Right ventricle myocardium inferior (tissue), 1 donor: ENCODE measurements at regions of chr11 and their contacts with region 1.

Region 1: GRCh38 chr11:83071567-83072349 is at the start of gene RAB30:
- DNase-seq: peak; percentile 95
- ATAC-seq: peak; percentile 99
- total RNA-seq, gene RAB30: 28.2 TPM

Region 2: DNA sequence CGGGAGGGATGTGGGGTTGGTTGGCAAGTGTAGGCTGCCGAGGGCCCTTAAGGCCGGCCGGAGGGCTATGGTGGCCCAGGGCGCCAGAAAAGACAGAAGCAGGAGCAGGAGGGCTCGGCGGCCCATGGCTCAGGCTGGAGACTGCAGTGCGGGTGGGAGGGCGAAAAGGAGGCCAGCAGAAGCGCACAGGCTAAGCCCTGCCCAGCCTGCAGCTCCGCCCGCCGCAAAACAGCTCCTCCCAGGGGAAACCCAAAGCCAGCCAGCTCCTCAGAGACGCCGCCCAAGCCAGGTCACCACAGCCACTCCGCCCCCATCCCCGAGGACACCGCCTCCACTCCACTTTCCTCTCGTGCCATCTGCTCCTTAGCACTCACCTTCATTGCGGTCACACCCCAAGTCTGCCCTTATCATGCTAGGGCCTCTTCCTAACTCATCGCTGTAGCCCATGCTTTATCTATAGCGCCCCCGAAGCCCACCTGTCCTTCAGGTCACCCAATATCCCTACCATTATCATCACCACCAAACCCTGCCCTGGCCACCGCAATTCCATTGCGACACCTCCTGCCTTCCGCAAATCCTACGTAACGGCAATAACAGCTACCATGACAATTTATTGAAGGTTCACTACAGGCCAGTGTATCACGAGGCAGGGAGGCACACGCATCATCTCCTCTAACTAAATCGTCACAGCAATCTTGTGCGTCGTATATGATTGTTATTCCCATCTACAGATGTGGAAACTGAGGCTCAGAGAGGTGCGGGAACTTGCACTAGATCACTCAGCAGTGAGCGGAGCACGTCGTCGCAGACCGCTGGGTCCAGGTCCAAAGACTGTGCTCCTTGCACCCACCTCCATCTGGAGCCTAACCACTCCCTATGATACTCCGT is 171.2 kb before region 1 on chr11 and contains the start of gene PRCP:
- intact Hi-C with region 1: loop called (anchors 10 kb)
- DNase-seq: peak; percentile 97
- ATAC-seq: peak; percentile 96
- total RNA-seq, gene PRCP: 43.4 TPM

Region 3: GRCh38 chr11:82989628-82990404 is 81.9 kb before region 1 on chr11:
- intact Hi-C with region 1: loop called (anchors 5 kb)
- DNase-seq: no peak
- ATAC-seq: no peak

Region 4: DNA sequence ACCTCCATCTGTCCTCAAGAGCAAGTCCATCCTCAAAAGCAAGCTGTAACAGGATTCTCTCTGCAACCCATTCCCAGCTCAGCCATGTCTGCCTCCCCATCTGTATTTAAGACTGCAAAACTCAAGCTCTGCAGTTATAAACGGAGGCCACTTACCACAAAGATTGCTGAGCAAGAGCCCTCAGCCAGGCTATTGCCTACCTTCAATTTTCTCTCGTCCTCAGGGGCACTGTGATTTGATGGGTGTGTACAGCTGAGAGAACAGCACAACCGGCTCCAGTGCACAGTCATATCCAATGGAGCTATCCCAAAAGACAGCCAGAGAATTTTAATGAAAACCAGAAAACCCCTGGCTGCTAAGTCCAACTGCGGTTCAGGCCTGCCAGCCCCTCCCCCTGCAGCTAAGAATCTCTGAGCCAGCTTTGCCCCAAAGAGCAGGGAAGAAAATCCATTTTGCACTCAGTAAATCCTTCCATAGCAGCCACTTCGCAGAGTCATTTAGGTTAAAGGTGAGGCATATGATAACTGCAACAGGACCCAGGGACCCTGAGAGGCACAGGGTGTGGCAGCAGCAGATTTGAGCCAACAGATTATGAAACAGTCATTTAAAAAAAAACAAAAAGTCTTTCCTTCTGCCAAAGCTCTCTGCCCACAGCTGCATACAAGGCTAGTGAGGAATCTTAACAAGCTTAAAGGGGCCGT is 37.6 kb before region 1 on chr11:
- intact Hi-C with region 1: loop called (anchors 2 kb)
- DNase-seq: no peak
- ATAC-seq: peak; percentile 91

Region 5: GRCh38 chr11:83193315-83194280 is 121.8 kb after region 1 on chr11 and contains the start of gene ANKRD42:
- intact Hi-C with region 1: loop called (anchors 5 kb)
- DNase-seq: peak; percentile 95
- ATAC-seq: peak; percentile 96
- total RNA-seq, gene ANKRD42: 4.7 TPM